ENCODE measurements at regions of chr16 and their contacts with region 1.

Region 1: GRCh38 chr16:2429034-2429770 is at the start of gene CCNF:
- DNase-seq: peak; percentile 99
- H3K4me3 Mint-ChIP-seq: peak within 1 kb of the TSS; percentile 92
- H3K27ac Mint-ChIP-seq: peak within 1 kb of the TSS; percentile 69
- H3K4me1 Mint-ChIP-seq: peaks cover 18% of the 10 kb centered on the region
- H3K27me3 Mint-ChIP-seq: no peaks in the 10 kb centered on the region
- total RNA-seq, gene CCNF: 53.5 to 54.7 TPM

Region 2: GRCh38 chr16:2156022-2156848 is 273.0 kb before region 1 on chr16:
- CTCF ChIA-PET with region 1: no interaction called
- POLR2A ChIA-PET with region 1: no interaction called
- intact Hi-C with region 1: no loop called
- DNase-seq: peak; percentile 32
- H3K4me3 Mint-ChIP-seq: peak overlapping the region; percentile 93
- H3K27ac Mint-ChIP-seq: peak overlapping the region; percentile 87
- H3K4me1 Mint-ChIP-seq: peaks cover 39% of the 10 kb centered on the region
- H3K27me3 Mint-ChIP-seq: no peaks in the 10 kb centered on the region

Region 3: GRCh38 chr16:2267913-2268666 is 161.1 kb before region 1 on chr16 and contains the start of gene RNPS1:
- CTCF ChIA-PET with region 1: no interaction called
- POLR2A ChIA-PET with region 1: no interaction called
- intact Hi-C with region 1: loop called (anchors 2 kb)
- DNase-seq: peak; percentile 97
- H3K4me3 Mint-ChIP-seq: peak within 1 kb of the TSS; percentile 88
- H3K27ac Mint-ChIP-seq: peak within 1 kb of the TSS; percentile 97
- H3K4me1 Mint-ChIP-seq: peaks cover 35% of the 10 kb centered on the region
- H3K27me3 Mint-ChIP-seq: no peaks in the 10 kb centered on the region
- total RNA-seq, gene RNPS1: 292 to 294 TPM

Region 4: GRCh38 chr16:2340564-2341455 is 88.4 kb before region 1 on chr16 and contains the start of gene ABCA3:
- CTCF ChIA-PET with region 1: interaction called, 7 read pairs
- POLR2A ChIA-PET with region 1: no interaction called
- intact Hi-C with region 1: loop called (anchors 2 kb)
- DNase-seq: peak; percentile 98
- H3K4me3 Mint-ChIP-seq: peak within 1 kb of the TSS; percentile 76
- H3K27ac Mint-ChIP-seq: no peak within 1 kb of the TSS
- H3K4me1 Mint-ChIP-seq: peaks cover 22% of the 10 kb centered on the region
- H3K27me3 Mint-ChIP-seq: peaks cover 4% of the 10 kb centered on the region
- total RNA-seq, gene ABCA3: 6.1 to 6.4 TPM

Region 5: GRCh38 chr16:2474877-2475412 is 45.7 kb after region 1 on chr16 and contains the start of gene TBC1D24:
- CTCF ChIA-PET with region 1: no interaction called
- POLR2A ChIA-PET with region 1: interaction called, 4 read pairs
- intact Hi-C with region 1: loop called (anchors 5 kb)
- DNase-seq: peak; percentile 88
- H3K4me3 Mint-ChIP-seq: peak within 1 kb of the TSS; percentile 72
- H3K27ac Mint-ChIP-seq: peak within 1 kb of the TSS; percentile 8
- H3K4me1 Mint-ChIP-seq: peaks cover 16% of the 10 kb centered on the region
- H3K27me3 Mint-ChIP-seq: peaks cover 19% of the 10 kb centered on the region
- total RNA-seq, gene TBC1D24: 12.2 to 12.4 TPM

Region 6: GRCh38 chr16:2486645-2487516 is 57.7 kb after region 1 on chr16:
- CTCF ChIA-PET with region 1: no interaction called
- POLR2A ChIA-PET with region 1: no interaction called
- intact Hi-C with region 1: loop called (anchors 2 kb)
- DNase-seq: peak; percentile 89
- H3K4me3 Mint-ChIP-seq: peak overlapping the region; percentile 41
- H3K27ac Mint-ChIP-seq: peak overlapping the region; percentile 38
- H3K4me1 Mint-ChIP-seq: peaks cover 13% of the 10 kb centered on the region
- H3K27me3 Mint-ChIP-seq: no peaks in the 10 kb centered on the region

Region 7: GRCh38 chr16:2603165-2604015 is 174.2 kb after region 1 on chr16:
- CTCF ChIA-PET with region 1: no interaction called
- POLR2A ChIA-PET with region 1: no interaction called
- intact Hi-C with region 1: no loop called
- DNase-seq: peak; percentile 92
- H3K4me3 Mint-ChIP-seq: peak overlapping the region; percentile 97
- H3K27ac Mint-ChIP-seq: peak overlapping the region; percentile 92
- H3K4me1 Mint-ChIP-seq: peaks cover 21% of the 10 kb centered on the region
- H3K27me3 Mint-ChIP-seq: no peaks in the 10 kb centered on the region

Measured in activated CD4-positive, alpha-beta memory T cell treated with anti-CD3 and anti-CD28 coated beads for 36 hours (primary cell).